CD4-positive, alpha-beta T cell (primary cell): ENCODE measurements at regions of chr9 and their contacts with region 1.

Region 1: DNA sequence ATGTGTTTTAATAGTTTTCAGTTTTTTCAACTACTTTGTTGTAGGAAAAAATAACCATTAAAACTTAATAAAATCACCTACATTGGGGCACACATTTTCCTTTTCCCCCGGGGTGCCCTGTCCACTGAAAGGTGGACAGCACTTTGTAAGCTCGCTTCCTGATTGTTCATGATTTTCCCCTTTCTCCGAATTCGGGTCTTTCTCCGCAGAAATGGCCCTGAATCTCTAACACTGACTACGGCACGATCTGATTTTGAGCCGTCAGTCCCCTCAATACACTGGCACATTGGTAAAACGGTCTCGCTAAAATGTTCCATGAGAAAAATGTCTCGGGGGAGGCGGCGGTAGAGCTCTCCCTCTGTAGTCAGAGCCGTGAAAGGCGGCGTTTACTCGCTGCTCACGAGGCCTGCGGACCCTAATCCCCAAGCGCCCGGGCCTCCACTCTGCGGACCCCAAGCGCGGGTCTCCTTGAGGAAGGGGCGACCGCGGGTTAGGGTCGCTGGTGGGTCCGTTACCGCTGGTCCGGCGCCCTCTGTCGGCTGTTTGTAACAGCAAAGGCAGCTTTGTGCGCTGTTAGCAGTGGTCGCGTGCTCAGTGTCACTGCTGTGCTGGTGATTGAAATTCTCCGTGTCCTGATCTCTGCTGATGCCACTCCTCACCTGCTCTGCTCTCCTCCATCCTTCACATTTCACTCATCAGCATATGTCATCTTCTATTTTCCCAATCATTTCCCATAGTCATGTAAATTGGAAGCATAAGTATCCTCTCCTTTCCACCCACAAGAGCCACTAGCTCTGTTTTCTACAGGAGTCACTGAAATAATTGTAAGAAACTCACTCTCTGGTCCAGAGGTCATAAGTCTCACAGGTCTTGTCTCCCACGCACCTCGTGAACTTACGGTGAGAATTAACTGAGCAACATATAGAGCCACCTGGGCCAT is 10.8 kb upstream of the IFNA2 start:
- DNase-seq: peak; percentile 28 to 76 (median 51)
- ATAC-seq: peak; percentile 76
- H3K4me3 ChIP-seq: peak overlapping the region; percentile 39
- H3K4me3 Mint-ChIP-seq: peak overlapping the region; percentile 66
- H3K27ac ChIP-seq: no peak overlapping the region
- H3K27ac Mint-ChIP-seq: no peak overlapping the region
- H3K4me1 ChIP-seq: peaks cover 8% of the 10 kb centered on the region
- H3K4me1 Mint-ChIP-seq: peaks cover 9% of the 10 kb centered on the region
- H3K27me3 ChIP-seq: peaks cover 11 to 35% of the 10 kb centered on the region in 2 experiments
- H3K27me3 Mint-ChIP-seq: peaks cover 70% of the 10 kb centered on the region
- CTCF ChIP-seq: peak; percentile 95

Region 2: GRCh38 chr9:21135504-21136135 is 260.4 kb before region 1 on chr9:
- CTCF ChIA-PET with region 1: no interaction called
- POLR2A ChIA-PET with region 1: no interaction called
- intact Hi-C with region 1: no loop called
- DNase-seq: no peak
- ATAC-seq: no peak
- H3K4me3 ChIP-seq: no peak overlapping the region
- H3K4me3 Mint-ChIP-seq: no peak overlapping the region
- H3K27ac ChIP-seq: no peak overlapping the region
- H3K27ac Mint-ChIP-seq: no peak overlapping the region
- H3K4me1 ChIP-seq: no peaks in the 10 kb centered on the region
- H3K4me1 Mint-ChIP-seq: no peaks in the 10 kb centered on the region
- H3K27me3 ChIP-seq: no peaks in the 10 kb centered on the region
- H3K27me3 Mint-ChIP-seq: no peaks in the 10 kb centered on the region
- CTCF ChIP-seq: no peak

Region 3: GRCh38 chr9:21317956-21318923 is 77.8 kb before region 1 on chr9:
- CTCF ChIA-PET with region 1: interaction called, 16 read pairs
- POLR2A ChIA-PET with region 1: interaction called, 3 read pairs
- intact Hi-C with region 1: no loop called
- DNase-seq: peak in 10 of 14 experiments; percentile 3 to 66 (median 14)
- ATAC-seq: peak; percentile 78
- H3K4me3 ChIP-seq: no peak overlapping the region
- H3K4me3 Mint-ChIP-seq: no peak overlapping the region
- H3K27ac ChIP-seq: no peak overlapping the region
- H3K27ac Mint-ChIP-seq: no peak overlapping the region
- H3K4me1 ChIP-seq: no peaks in the 10 kb centered on the region
- H3K4me1 Mint-ChIP-seq: peaks cover 10% of the 10 kb centered on the region
- H3K27me3 ChIP-seq: no peaks in the 10 kb centered on the region
- H3K27me3 Mint-ChIP-seq: no peaks in the 10 kb centered on the region
- CTCF ChIP-seq: peak; percentile 75

Region 4: GRCh38 chr9:21802195-21803000 is 406.4 kb after region 1 on chr9 and contains the start of gene MTAP:
- CTCF ChIA-PET with region 1: no interaction called
- POLR2A ChIA-PET with region 1: no interaction called
- intact Hi-C with region 1: loop called in 1 of 2 experiments (anchors 2 kb)
- DNase-seq: peak; percentile 35 to 83 (median 57)
- ATAC-seq: peak; percentile 75
- H3K4me3 ChIP-seq: peak within 1 kb of the TSS; percentile 82
- H3K4me3 Mint-ChIP-seq: peak within 1 kb of the TSS; percentile 98
- H3K27ac ChIP-seq: peak within 1 kb of the TSS; percentile 16 to 55
- H3K27ac Mint-ChIP-seq: peak within 1 kb of the TSS; percentile 96
- H3K4me1 ChIP-seq: peaks cover 35% of the 10 kb centered on the region
- H3K4me1 Mint-ChIP-seq: peaks cover 47% of the 10 kb centered on the region
- H3K27me3 ChIP-seq: peaks cover 0 to 5% of the 10 kb centered on the region in 2 experiments
- H3K27me3 Mint-ChIP-seq: peaks cover 12% of the 10 kb centered on the region
- CTCF ChIP-seq: no peak
- total RNA-seq, gene MTAP: 17.2 to 17.8 TPM